ENCODE measurements at regions of chr4 and their contacts with region 1.

Region 1: GRCh38 chr4:169810325-169811323 is 52.9 kb upstream of the HPF1 start:
- DNase-seq: peak; percentile 60
- CTCF ChIP-seq: peak; percentile 75

Region 2: DNA sequence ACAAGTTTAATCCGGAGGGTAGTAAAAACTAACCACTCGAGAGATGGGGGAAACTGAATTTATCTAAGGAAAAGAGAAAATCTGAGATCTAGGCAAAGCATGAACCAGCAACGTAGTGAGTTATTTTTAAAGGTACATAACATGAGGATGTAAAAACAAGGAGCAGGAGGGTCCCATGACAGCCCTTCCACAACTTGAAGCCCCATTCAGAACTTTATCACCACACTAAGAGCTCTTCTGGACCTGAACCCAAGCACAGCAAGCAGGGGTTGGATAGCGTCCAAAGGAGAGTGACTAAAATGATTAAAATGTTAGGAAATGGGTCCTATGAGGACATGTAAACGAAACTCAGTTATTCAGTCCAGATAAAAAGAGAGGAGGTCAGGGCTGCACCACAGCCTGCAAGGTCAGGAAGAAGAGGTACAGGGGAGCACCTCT is 556.1 kb before region 1 on chr4:
- CTCF ChIA-PET with region 1: no interaction called
- POLR2A ChIA-PET with region 1: no interaction called
- DNase-seq: no peak
- CTCF ChIP-seq: no peak

Region 3: DNA sequence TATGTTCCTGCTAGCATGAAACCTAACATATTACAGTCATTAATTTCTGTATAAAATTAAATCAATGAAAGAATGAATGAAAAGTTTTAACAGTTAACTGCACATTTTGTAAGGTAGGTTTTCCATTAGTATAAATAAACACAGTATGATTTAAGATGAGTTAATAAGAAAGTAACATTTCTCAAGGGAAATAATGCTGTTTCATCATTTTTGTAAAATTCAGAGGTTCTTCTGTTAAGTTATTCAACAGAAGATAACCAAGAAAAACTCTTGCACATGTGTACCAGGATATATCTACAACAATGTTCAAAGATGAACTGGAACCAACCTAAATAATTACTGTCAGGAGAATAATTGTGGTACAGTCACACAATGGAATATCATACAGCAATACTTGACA is 286.8 kb before region 1 on chr4:
- CTCF ChIA-PET with region 1: no interaction called
- POLR2A ChIA-PET with region 1: no interaction called
- DNase-seq: no peak
- CTCF ChIP-seq: no peak

Region 4: GRCh38 chr4:169826634-169827187 is 16.1 kb after region 1 on chr4:
- CTCF ChIA-PET with region 1: interaction called, 19 read pairs
- POLR2A ChIA-PET with region 1: no interaction called
- DNase-seq: no peak
- CTCF ChIP-seq: no peak

Region 5: GRCh38 chr4:170040031-170040680 is 229.5 kb after region 1 on chr4:
- CTCF ChIA-PET with region 1: interaction called, 11 read pairs
- POLR2A ChIA-PET with region 1: no interaction called
- DNase-seq: no peak
- CTCF ChIP-seq: no peak

Region 6: DNA sequence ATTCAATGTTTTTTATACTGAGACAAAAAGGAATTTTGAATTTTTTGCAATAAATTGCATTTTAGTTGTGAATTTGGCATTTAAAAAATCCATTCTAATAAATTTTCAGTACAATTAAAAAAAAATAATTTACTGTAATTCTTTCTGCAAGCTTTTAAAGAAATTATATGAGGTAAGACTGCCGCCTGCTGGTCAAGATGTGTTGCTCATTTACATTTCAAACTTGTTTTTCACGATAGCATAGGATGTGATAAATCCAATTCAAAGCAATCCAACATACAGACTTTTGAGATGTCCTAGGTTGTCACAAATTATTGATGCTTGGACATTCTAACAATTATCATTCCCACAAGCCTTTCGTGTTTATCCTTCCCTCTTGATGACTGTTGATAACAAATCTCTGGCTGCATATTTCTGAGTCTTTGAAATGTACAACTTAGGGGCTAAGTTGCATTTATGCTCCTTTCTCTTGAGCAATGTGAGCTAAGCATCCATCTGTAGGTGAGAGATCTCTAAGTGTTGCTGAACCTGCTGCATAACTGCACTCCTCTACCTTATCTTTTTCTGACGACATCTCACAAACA is 237.2 kb after region 1 on chr4:
- CTCF ChIA-PET with region 1: interaction called, 57 read pairs
- POLR2A ChIA-PET with region 1: no interaction called
- DNase-seq: peak; percentile 38
- CTCF ChIP-seq: peak; percentile 66

Measured in GM10248 (cell line).